ENCODE measurements at regions of chr12 and their contacts with region 1.

Region 1: DNA sequence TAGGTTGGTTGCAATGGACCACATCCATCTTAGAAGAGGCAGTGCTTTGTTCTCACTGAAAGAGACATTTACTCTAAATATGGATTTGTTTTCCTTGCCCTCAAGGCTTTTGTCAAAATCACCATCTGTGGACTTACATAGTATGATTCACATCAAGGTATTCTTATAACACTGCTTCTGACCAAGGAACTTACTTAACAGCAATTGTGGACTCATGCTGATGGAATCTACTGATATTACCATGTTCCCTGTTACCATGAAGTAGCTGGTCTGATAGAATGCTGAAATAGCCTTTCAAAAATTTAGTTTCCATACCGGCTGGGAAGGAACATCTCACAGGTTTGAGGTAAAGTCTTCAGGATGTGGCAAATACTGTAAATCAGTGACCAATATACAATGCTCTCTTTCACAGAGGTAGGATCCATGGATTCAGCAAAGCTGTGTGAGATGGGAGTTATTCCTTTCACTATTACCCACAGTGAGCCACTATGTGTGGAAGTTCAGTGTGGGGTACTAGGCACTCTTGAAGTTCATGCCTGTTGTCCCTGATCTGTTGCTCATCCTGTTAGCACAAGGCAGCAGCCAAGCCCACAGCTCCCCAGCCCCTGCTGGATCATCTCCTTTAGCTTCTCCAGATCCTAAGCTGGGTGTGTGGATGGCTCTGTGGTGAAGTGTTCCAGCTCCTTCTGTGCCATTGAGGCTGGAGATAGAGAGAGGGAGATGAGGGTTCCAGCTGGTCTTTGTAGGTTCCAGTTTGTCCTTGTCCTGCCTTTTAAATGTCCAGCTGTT is 126.4 kb downstream of the ATP23 start:
- DNase-seq: peak; percentile 87
- H3K4me3 ChIP-seq: no peak overlapping the region
- H3K27me3 ChIP-seq: no peaks in the 10 kb centered on the region
- CTCF ChIP-seq: no peak

Region 2: DNA sequence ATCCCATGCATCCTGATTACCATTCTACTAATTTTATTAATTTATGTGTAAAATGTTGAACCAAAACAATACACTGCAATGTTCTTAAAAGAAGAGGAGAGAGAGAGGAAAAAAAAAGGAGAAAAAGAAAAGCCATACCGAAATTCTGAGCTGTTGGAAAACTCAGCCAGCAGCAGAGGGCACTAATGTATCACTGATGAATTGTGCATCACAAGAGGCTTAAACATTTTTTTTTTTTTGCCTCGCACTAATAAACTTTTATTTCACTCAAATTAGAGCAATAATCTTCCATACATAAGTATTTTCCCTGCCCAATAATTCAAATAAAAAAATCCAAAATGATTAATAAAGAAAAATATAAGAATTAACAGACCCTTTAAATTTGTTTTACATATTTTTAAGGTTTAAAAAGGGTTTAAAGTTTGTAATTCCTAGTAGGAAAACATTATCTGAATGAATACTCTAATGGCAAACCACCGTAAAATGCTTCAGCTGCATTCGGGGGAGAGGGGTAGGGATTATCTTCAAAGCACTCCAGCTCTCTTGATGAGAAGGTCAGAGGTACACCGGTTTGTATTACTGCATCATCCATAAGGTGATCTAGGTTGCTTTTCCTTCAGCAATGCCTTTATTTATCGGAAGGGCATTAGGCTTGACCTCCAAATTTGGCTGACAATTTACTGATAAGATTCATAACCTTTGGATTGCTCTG is 84.5 kb before region 1 on chr12:
- CTCF ChIA-PET with region 1: interaction called, 10 read pairs
- POLR2A ChIA-PET with region 1: no interaction called
- DNase-seq: peak; percentile 17
- H3K4me3 ChIP-seq: no peak overlapping the region
- H3K27me3 ChIP-seq: no peaks in the 10 kb centered on the region
- CTCF ChIP-seq: peak; percentile 65

Region 3: GRCh38 chr12:58051378-58051777 is 16.4 kb before region 1 on chr12:
- CTCF ChIA-PET with region 1: no interaction called
- POLR2A ChIA-PET with region 1: no interaction called
- DNase-seq: no peak
- H3K4me3 ChIP-seq: no peak overlapping the region
- H3K27me3 ChIP-seq: no peaks in the 10 kb centered on the region; the same call in 1 of the 2 replicates
- CTCF ChIP-seq: no peak

Region 4: DNA sequence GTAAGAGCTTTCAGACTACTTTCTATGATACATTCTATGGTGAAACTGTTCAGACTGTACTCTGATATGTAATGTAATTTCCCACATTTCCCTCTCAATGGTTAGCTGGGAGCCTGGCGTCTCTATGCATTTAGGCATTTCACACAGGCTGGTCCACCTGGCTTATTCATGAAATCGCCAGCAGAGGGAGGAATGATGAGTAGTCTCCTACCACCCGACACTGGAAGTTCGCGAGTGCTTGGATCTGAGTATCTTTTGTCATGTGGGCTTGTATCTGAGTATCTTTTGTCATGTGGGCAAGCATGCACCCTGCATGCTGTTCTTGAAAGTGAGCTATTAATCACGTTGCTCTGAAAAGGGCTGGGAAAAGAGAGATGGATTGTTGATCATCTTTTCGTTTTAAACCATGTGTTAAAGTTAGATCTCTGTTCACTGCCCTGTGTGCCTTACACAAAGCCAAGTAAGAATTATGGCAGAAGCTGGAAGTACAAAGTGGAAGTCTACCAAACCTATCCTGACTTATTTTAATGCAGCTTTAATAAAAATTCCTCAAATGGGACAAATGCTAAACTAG is 108.6 kb after region 1 on chr12:
- CTCF ChIA-PET with region 1: no interaction called
- POLR2A ChIA-PET with region 1: no interaction called
- DNase-seq: no peak
- H3K4me3 ChIP-seq: no peak overlapping the region
- H3K27me3 ChIP-seq: peaks cover 6% of the 10 kb centered on the region
- CTCF ChIP-seq: peak; percentile 50

Measured in BJ (cell line).